Naive thymus-derived CD4-positive, alpha-beta T cell (primary cell): ENCODE measurements at regions of chr4 and their contacts with region 1.

Region 1: GRCh38 chr4:87848622-87849351 is 16.0 kb downstream of the MEPE start:
- DNase-seq: peak in 6 of 9 donors; percentile 9 to 37 (median 26)
- ATAC-seq: peak; percentile 77
- H3K4me3 ChIP-seq: peak overlapping the region; percentile 26
- H3K4me3 Mint-ChIP-seq: peak overlapping the region in 8 of 10 donors; percentile 37 to 78 (median 62)
- H3K27ac ChIP-seq: no peak overlapping the region
- H3K27ac Mint-ChIP-seq: no peak overlapping the region
- H3K4me1 ChIP-seq: peaks cover 0 to 9% of the 10 kb centered on the region in 2 donors
- H3K4me1 Mint-ChIP-seq: peaks cover 10 to 21% (median 14%) of the 10 kb centered on the region in 7 donors
- H3K27me3 ChIP-seq: no peaks in the 10 kb centered on the region
- H3K27me3 Mint-ChIP-seq: peaks cover 16 to 41% (median 30%) of the 10 kb centered on the region in 5 donors

Region 2: GRCh38 chr4:87375719-87376291 is 473.0 kb before region 1 on chr4:
- CTCF ChIA-PET with region 1: no interaction called
- POLR2A ChIA-PET with region 1: no interaction called
- intact Hi-C with region 1: loop called (anchors 2 to 10 kb)
- DNase-seq: peak in 4 of 9 donors; percentile 18 to 36 (median 24)
- ATAC-seq: peak; percentile 62
- H3K4me3 ChIP-seq: no peak overlapping the region
- H3K4me3 Mint-ChIP-seq: no peak overlapping the region
- H3K27ac ChIP-seq: no peak overlapping the region
- H3K27ac Mint-ChIP-seq: no peak overlapping the region
- H3K4me1 ChIP-seq: no peaks in the 10 kb centered on the region
- H3K4me1 Mint-ChIP-seq: peaks cover 0 to 9% (median 0%) of the 10 kb centered on the region in 7 donors
- H3K27me3 ChIP-seq: no peaks in the 10 kb centered on the region
- H3K27me3 Mint-ChIP-seq: no peaks in the 10 kb centered on the region

Region 3: GRCh38 chr4:87679449-87680169 is 169.2 kb before region 1 on chr4:
- CTCF ChIA-PET with region 1: no interaction called
- POLR2A ChIA-PET with region 1: no interaction called
- intact Hi-C with region 1: loop called (anchors 1 to 2 kb)
- DNase-seq: peak in 5 of 9 donors; percentile 7 to 23 (median 22)
- ATAC-seq: no peak
- H3K4me3 ChIP-seq: no peak overlapping the region
- H3K4me3 Mint-ChIP-seq: no peak overlapping the region
- H3K27ac ChIP-seq: no peak overlapping the region
- H3K27ac Mint-ChIP-seq: no peak overlapping the region
- H3K4me1 ChIP-seq: no peaks in the 10 kb centered on the region
- H3K4me1 Mint-ChIP-seq: no peaks in the 10 kb centered on the region
- H3K27me3 ChIP-seq: no peaks in the 10 kb centered on the region
- H3K27me3 Mint-ChIP-seq: peaks cover 0 to 10% (median 3%) of the 10 kb centered on the region in 5 donors

Region 4: GRCh38 chr4:88211473-88212252 is 362.9 kb after region 1 on chr4:
- CTCF ChIA-PET with region 1: interaction called, 11 read pairs
- POLR2A ChIA-PET with region 1: no interaction called
- intact Hi-C with region 1: loop called in 1 of 2 experiments (anchors 1 kb)
- DNase-seq: peak in 7 of 9 donors; percentile 28 to 65 (median 55)
- ATAC-seq: peak; percentile 60
- H3K4me3 ChIP-seq: no peak overlapping the region
- H3K4me3 Mint-ChIP-seq: no peak overlapping the region
- H3K27ac ChIP-seq: no peak overlapping the region
- H3K27ac Mint-ChIP-seq: no peak overlapping the region
- H3K4me1 ChIP-seq: no peaks in the 10 kb centered on the region
- H3K4me1 Mint-ChIP-seq: peaks cover 0 to 7% (median 4%) of the 10 kb centered on the region in 7 donors
- H3K27me3 ChIP-seq: no peaks in the 10 kb centered on the region
- H3K27me3 Mint-ChIP-seq: peaks cover 0 to 21% (median 0%) of the 10 kb centered on the region in 5 donors